ENCODE measurements at regions of chr1 and their contacts with region 1.

Region 1: DNA sequence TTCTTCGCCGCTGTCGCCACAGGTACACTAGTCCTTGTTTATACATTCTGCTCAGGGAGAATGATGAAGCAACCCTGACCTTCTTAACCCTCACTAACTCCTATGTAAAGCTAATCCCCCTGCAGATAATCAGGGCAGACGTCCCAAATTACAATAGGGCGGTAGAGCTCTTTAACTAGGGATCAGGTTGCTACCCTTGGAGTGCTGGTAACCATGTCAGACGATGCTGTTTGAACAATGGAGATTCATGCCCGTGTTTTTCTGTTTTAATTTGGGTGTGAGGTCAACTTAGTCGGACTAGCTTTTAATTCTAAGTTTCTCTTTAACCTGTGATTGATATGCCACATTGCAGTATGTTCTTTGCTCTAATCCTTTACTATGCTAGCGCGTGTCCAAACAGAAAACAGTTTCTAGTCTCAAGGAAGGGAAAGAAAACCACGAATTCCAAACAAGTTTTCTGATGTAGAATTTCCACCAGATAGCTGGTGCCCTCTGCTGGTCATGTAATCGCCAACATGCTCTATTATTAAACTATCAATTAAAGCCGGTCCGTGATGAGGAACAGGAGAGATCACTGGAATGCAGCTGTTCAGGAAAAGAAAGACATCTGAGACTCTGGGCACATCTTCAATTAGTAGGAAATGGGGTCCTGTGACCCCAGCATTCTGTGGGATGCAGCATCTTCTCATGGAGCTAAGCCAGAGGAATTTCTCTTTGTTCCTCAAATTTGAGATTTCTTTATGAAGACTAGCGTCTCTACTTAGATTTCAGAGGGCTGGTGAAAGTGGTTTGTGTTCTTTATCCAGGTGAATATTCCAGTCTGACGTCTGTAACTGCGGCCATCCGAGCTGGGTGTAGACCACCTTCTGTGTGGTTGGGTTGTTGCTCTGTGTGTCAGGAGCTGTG is 18.3 kb upstream of the VAMP3 start:
- DNase-seq: peak; percentile 25 to 53
- ATAC-seq: peak; percentile 76 to 78; a peak in 5 of 6 replicates
- H3K4me3 ChIP-seq: peak overlapping the region; percentile 35
- H3K27ac ChIP-seq: peak overlapping the region in 1 of 2 experiments; percentile 11; a peak in 1 of 6 replicates
- H3K4me1 ChIP-seq: no peaks in the 10 kb centered on the region
- CTCF ChIP-seq: peak; percentile 83
- EP300 ChIP-seq: no peak
- POLR2A ChIP-seq: no peak
- RAD21 ChIP-seq: peak; percentile 76 to 82

Region 2: DNA sequence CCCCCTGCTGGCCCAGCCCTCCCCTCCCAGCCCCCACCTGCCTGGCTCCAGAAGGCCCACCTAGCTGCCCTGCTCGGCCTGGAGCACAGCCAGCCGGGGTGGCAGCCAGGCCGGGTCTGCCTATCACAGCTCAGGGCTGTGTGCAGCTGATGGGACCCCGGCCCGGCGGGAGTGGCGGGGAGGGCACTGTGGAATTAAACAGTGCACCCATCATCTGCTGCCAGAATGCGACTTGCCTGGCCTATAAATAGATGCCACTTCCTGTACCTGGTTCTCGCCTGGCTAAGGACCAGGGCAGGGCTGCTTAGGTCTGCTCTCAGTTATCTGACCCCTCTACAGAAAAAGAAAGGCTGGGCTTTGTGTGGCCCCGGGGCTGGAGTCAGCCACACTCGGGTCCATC is 79.9 kb before region 1 on chr1:
- CTCF ChIA-PET with region 1: interaction called, 410 read pairs
- POLR2A ChIA-PET with region 1: interaction called, 6 read pairs
- DNase-seq: no peak
- ATAC-seq: no peak
- H3K4me3 ChIP-seq: no peak overlapping the region
- H3K27ac ChIP-seq: no peak overlapping the region
- H3K4me1 ChIP-seq: 0 out of 3 replicates have a peak, but pooled peaks cover 3% of the 10 kb centered on the region
- CTCF ChIP-seq: no peak
- EP300 ChIP-seq: no peak
- POLR2A ChIP-seq: no peak
- RAD21 ChIP-seq: no peak

Region 3: DNA sequence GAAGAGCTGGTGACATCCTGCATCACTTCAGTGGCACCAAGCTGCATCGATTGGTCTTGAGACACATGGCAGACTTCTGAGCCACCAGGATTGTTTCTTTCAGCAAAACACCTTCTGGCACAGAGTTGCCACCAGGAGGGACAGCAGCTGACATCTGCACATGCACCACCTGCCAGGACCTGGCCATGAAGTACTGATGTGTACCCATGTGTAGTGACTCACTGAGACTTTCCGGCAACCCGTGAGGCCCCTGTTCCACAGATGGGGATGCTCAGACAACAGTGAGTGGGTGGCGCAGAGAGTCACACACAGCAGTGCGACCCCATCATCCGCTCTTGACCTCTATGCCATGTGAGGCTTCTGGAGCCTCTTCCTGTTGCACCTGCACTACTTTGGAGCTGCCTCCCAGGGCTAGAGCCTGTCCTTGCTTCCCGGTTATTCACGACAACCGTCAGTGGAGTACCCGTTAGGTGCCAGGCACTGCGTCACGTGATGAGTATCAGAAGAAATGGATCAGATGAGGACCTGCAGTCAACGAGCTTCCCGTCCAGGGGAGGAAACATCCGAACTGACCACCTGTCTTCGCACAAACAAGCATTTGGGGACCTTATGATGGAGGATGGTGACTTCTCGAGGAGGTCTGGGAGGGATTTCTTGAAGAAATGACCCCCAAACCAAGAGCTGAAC is 62.1 kb before region 1 on chr1:
- CTCF ChIA-PET with region 1: interaction called, 10 read pairs
- POLR2A ChIA-PET with region 1: no interaction called
- DNase-seq: no peak
- ATAC-seq: no peak
- H3K4me3 ChIP-seq: no peak overlapping the region
- H3K27ac ChIP-seq: no peak overlapping the region
- H3K4me1 ChIP-seq: no peaks in the 10 kb centered on the region
- CTCF ChIP-seq: no peak
- EP300 ChIP-seq: no peak
- POLR2A ChIP-seq: no peak
- RAD21 ChIP-seq: no peak

Region 4: GRCh38 chr1:7716506-7716905 is 36.3 kb before region 1 on chr1:
- CTCF ChIA-PET with region 1: interaction called, 12 read pairs
- POLR2A ChIA-PET with region 1: no interaction called
- DNase-seq: no peak
- ATAC-seq: no peak
- H3K4me3 ChIP-seq: no peak overlapping the region
- H3K27ac ChIP-seq: no peak overlapping the region
- H3K4me1 ChIP-seq: no peaks in the 10 kb centered on the region
- CTCF ChIP-seq: no peak
- EP300 ChIP-seq: no peak
- POLR2A ChIP-seq: no peak
- RAD21 ChIP-seq: no peak

Region 5: DNA sequence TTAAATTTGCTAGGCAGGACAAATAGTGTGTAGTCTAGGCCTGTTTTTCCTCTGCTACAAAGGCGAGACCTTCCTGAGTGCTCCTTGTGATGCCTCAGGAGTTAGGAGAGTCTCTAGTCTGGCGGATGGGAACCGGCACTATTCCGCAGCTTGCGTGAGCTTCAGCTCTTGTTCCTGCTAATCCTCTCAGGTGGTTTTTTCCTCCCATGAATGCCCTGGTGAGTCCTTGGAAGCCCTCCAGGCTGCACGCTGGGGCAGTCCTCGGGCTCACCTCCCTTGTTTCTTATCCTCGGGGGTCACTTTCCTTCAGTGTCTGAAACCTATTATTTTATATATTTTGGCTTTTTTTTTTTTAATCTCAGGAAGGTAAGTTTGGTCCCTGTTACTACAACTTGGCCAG is 71.9 kb after region 1 on chr1:
- CTCF ChIA-PET with region 1: no interaction called
- POLR2A ChIA-PET with region 1: no interaction called
- DNase-seq: no peak
- ATAC-seq: no peak
- H3K4me3 ChIP-seq: no peak overlapping the region
- H3K27ac ChIP-seq: no peak overlapping the region
- H3K4me1 ChIP-seq: no peaks in the 10 kb centered on the region
- CTCF ChIP-seq: no peak
- EP300 ChIP-seq: no peak
- POLR2A ChIP-seq: no peak
- RAD21 ChIP-seq: no peak

Region 6: GRCh38 chr1:7842517-7842916 is 89.8 kb after region 1 on chr1:
- CTCF ChIA-PET with region 1: no interaction called
- POLR2A ChIA-PET with region 1: no interaction called
- DNase-seq: no peak
- ATAC-seq: no peak
- H3K4me3 ChIP-seq: no peak overlapping the region
- H3K27ac ChIP-seq: no peak overlapping the region
- H3K4me1 ChIP-seq: no peaks in the 10 kb centered on the region
- CTCF ChIP-seq: no peak
- EP300 ChIP-seq: no peak
- POLR2A ChIP-seq: no peak
- RAD21 ChIP-seq: no peak

Measured in A549 (cell line).